ENCODE measurements at regions of chr12 and their contacts with region 1.

Region 1: DNA sequence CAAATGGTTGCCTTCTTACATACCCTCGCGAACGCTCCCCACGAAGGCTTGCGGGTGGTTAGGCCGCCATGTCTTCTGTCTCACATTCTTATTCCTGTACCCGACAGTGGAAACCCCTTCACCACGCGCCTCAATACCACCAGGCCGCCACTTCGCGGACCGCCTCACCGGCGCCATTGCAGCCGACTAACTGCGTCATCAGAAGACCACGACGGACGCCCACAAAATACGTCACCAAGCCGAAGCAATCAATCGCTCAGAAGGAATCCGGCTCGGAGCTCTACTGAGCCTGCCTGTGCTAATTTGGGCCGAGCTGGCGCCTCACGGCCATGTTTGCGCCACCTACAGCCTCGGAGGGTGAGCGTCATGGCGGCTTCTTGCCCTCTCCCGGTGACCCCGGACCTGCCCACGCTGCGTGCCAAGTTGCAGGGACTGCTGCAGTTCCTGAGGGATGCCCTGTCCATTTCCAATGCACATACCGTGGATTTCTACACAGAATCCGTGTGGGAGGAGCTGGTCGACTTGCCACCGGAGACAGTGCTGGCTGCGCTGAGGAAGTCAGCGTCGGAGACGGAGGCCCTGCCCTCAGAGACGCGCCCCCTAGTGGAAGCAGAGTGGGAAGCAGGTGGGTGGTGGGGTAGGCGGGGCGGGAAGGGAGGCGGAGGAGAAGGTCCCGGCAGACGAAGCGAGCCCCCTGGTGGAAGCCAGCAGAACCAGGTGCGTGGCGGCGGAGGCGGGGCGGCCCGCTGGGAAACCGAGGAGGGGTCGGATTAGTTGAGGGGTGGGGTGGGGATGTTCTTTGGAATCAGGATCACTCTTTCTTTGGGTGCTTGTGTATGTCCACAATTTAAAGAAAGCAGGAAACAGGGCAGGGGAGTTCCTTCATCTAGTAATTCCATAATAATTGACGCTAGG is at the starts of genes CCDC59 and METTL25:
- DNase-seq: peak; percentile 97
- H3K4me3 Mint-ChIP-seq: peak within 1 kb of the TSS; percentile 91
- H3K27ac Mint-ChIP-seq: peak within 1 kb of the TSS; percentile 99
- H3K4me1 Mint-ChIP-seq: peaks cover 38% of the 10 kb centered on the region
- H3K27me3 Mint-ChIP-seq: no peaks in the 10 kb centered on the region
- total RNA-seq, gene CCDC59: 43.5 to 53.4 TPM
- total RNA-seq, gene METTL25: 8.3 to 8.6 TPM

Region 2: DNA sequence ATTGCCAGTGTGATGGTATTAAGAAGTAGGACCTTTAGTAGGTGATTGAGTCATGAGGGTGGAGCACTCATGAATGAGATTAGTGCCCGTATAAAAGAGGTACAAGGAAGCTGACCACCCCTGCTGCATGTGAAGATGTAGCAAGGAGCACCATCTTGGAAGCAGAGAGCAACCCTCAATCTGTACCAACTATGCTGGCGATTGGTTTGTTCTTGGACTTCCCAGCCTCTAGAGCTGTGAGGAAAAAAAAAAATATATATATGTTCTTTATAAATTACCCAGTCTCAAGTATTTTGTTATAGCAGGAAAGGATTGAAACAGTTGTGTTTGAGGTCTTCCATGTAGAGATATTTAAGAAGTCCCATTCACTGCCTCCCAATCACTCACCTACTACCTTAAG is 16.7 kb after region 1 on chr12:
- CTCF ChIA-PET with region 1: interaction called, 28 read pairs
- POLR2A ChIA-PET with region 1: no interaction called
- DNase-seq: no peak
- H3K4me3 Mint-ChIP-seq: no peak overlapping the region
- H3K27ac Mint-ChIP-seq: no peak overlapping the region
- H3K4me1 Mint-ChIP-seq: no peaks in the 10 kb centered on the region
- H3K27me3 Mint-ChIP-seq: no peaks in the 10 kb centered on the region